PC-9 (cell line): ENCODE measurements at regions of chr2 and their contacts with region 1.

Region 1: GRCh38 chr2:185108588-185108987 is 510.3 kb downstream of the ZNF804A start:
- DNase-seq: no peak
- H3K4me3 ChIP-seq: no peak overlapping the region
- H3K27ac ChIP-seq: no peak overlapping the region
- H3K4me1 ChIP-seq: no peaks in the 10 kb centered on the region
- H3K27me3 ChIP-seq: no peaks in the 10 kb centered on the region
- CTCF ChIP-seq: no peak

Region 2: GRCh38 chr2:184394642-184395041 is 713.9 kb before region 1 on chr2:
- CTCF ChIA-PET with region 1: no interaction called
- POLR2A ChIA-PET with region 1: no interaction called
- intact Hi-C with region 1: no loop called
- DNase-seq: no peak
- H3K4me3 ChIP-seq: no peak overlapping the region
- H3K27ac ChIP-seq: no peak overlapping the region
- H3K4me1 ChIP-seq: no peaks in the 10 kb centered on the region
- H3K27me3 ChIP-seq: no peaks in the 10 kb centered on the region
- CTCF ChIP-seq: no peak

Region 3: DNA sequence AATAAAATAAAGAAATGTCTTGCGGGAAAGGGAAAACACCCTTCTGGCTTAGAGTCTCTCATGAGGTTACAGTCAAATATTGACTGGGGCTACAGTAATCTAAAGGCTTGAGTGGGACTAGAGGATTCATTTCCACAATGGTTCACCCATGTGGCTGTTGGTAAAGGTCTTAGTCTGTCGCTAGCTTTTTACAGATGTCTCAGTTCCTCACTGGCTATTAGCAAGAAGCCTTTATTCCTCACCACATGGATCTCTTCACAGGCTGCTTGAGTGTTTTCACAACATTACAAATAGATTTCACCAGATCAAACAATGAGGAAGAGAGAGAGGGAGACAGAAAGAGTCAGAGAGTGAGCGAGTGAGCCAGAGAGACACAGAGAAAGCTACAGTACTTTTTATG is 1369.2 kb after region 1 on chr2:
- CTCF ChIA-PET with region 1: no interaction called
- POLR2A ChIA-PET with region 1: interaction called, 11 read pairs
- intact Hi-C with region 1: no loop called
- DNase-seq: no peak
- H3K4me3 ChIP-seq: no peak overlapping the region
- H3K27ac ChIP-seq: no peak overlapping the region
- H3K4me1 ChIP-seq: no peaks in the 10 kb centered on the region
- H3K27me3 ChIP-seq: no peaks in the 10 kb centered on the region
- CTCF ChIP-seq: no peak